Activated CD8-positive, alpha-beta T cell treated with anti-CD3 and anti-CD28 coated beads for 36 hours (primary cell): ENCODE measurements at regions of chr5 and their contacts with region 1.

Region 1: DNA sequence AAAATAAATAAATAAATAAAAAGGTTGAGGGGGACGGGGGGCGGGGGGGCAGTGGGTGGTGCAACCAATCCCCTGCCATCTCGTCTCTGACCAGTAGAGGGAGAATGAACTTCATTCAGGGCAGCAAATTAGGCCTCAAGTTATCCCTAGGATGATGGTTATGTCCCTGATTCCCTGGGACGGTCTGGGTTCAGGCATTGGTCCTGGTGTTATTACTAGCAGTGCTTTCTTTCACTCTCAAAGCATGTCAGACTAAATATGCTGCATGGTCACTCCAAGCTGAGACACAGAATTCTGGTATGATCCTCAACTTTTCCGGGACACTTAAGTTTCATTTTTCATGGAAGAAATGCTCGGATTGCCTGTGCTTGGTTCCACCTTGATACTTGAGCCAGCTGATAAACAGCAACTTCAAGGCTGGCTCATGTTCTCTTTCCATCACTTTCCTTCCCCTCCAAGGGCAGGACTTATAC is 59.4 kb downstream of the DAP start:
- DNase-seq: peak; percentile 49
- ATAC-seq: peak; percentile 38
- H3K4me3 Mint-ChIP-seq: no peak overlapping the region
- H3K27ac Mint-ChIP-seq: no peak overlapping the region
- H3K4me1 Mint-ChIP-seq: peaks cover 39% of the 10 kb centered on the region
- H3K27me3 Mint-ChIP-seq: no peaks in the 10 kb centered on the region
- CTCF ChIP-seq: peak; percentile 92

Region 2: GRCh38 chr5:10856683-10857337 is 155.2 kb after region 1 on chr5:
- CTCF ChIA-PET with region 1: interaction called, 11 read pairs
- POLR2A ChIA-PET with region 1: no interaction called
- intact Hi-C with region 1: no loop called
- DNase-seq: peak; percentile 45
- ATAC-seq: no peak
- H3K4me3 Mint-ChIP-seq: no peak overlapping the region
- H3K27ac Mint-ChIP-seq: no peak overlapping the region
- H3K4me1 Mint-ChIP-seq: no peaks in the 10 kb centered on the region
- H3K27me3 Mint-ChIP-seq: peaks cover 12% of the 10 kb centered on the region
- CTCF ChIP-seq: peak; percentile 77